Activated CD4-positive, alpha-beta memory T cell treated with anti-CD3 and anti-CD28 coated beads for 36 hours (primary cell): ENCODE measurements at regions of chr18 and their contacts with region 1.

Region 1: DNA sequence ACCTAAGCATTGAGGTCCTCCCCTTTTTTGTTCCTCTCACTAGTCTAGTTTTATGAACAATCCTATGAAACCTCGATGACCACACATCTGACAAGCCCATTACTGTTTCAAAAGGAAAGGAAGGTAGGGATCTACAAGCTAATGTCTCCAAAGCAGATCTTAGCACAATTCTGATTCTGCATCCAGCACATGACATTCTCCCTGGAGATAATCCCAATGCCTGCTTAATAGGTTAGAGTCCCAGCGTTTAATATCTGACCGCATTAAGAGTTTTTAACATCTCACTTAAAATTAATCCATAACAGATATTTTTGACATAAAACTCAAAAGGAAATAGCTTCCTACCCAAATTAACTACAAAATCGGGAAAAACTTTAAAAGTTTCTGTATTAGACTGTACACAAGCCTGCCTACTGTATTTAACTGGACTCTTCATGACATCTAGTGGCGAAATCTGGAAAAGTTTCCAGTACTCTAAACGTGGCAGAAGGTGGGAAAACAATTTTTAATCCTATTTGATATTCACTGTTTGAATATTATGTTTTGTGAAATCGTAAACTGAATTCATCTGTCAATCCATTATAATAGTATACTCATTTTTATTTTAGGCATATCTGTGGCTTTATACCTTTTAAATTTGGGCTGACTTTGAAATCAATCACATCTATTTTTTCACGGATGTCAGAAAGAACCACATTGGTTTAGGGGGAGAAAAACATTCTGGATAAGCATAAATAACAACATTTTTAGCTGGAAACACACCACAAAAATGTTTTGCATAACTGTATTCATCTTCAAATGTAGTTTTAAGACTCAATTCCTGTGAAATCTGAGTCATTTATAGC is 62.4 kb downstream of the TXNL1 start:
- DNase-seq: no peak
- H3K4me3 Mint-ChIP-seq: no peak overlapping the region
- H3K27ac Mint-ChIP-seq: no peak overlapping the region
- H3K4me1 Mint-ChIP-seq: no peaks in the 10 kb centered on the region
- H3K27me3 Mint-ChIP-seq: peaks cover 18% of the 10 kb centered on the region

Region 2: DNA sequence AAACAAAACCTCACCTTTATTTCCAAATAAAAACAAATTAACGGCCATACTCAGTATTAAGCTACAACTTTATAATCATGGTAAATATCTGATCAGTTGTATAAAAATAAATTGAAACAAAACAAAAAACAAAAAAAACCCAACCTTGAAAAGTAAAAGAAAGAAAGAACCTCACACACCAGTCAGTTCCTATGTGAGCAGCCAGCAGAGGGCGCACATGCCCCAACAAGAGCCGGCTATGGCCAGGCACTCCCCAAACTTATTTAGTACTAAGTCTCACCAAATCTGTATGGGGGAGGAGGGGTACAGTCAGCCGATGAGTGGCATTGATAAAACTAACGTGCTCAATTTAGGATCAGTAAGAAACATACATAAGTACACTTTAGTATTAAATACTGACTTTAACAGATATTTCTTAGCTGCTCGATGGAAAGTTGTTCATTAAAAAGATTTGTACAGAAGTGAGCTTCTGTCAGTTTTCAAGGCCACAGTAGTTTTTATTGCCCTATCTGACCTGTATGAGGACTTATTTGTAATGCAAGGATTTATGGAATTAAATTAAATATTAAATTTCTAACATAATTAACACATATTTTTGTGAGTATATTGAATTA is 1160.7 kb before region 1 on chr18:
- CTCF ChIA-PET with region 1: interaction called, 15 read pairs
- POLR2A ChIA-PET with region 1: no interaction called
- intact Hi-C with region 1: loop called (anchors 1 kb)
- DNase-seq: peak; percentile 79
- H3K4me3 Mint-ChIP-seq: no peak overlapping the region
- H3K27ac Mint-ChIP-seq: no peak overlapping the region
- H3K4me1 Mint-ChIP-seq: no peaks in the 10 kb centered on the region
- H3K27me3 Mint-ChIP-seq: peaks cover 6% of the 10 kb centered on the region

Region 3: DNA sequence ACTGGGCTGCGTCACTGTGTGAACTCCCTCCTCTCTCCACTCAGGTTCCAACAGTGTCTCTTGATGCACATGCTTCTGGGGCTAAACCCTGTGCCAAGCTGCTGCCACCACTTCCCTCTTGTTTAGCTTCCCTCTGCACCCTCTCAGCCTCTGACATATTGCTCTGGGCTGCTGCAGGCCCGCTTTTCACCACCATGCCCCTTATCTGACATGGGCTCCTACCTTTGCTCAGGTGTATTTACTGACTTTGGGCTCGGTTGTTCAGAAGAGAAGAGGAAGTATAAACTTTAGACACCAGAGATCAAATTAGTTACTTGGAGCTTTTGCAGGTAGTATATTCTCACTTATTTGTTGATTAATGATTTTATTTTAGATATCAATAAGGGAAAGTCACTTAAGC is 152.7 kb after region 1 on chr18:
- CTCF ChIA-PET with region 1: no interaction called
- POLR2A ChIA-PET with region 1: no interaction called
- intact Hi-C with region 1: no loop called
- DNase-seq: no peak
- H3K4me3 Mint-ChIP-seq: no peak overlapping the region
- H3K27ac Mint-ChIP-seq: no peak overlapping the region
- H3K4me1 Mint-ChIP-seq: peaks cover 16% of the 10 kb centered on the region
- H3K27me3 Mint-ChIP-seq: no peaks in the 10 kb centered on the region